B cell (primary cell): ENCODE measurements at regions of chr12 and their contacts with region 1.

Region 1: GRCh38 chr12:124992874-124993625 is 395 bp upstream of the BRI3BP start:
- DNase-seq: peak; percentile 92
- ATAC-seq: peak; percentile 34
- H3K4me3 ChIP-seq: peak overlapping the region; percentile 58 to 98 (median 76)
- H3K4me3 Mint-ChIP-seq: peak overlapping the region; percentile 90
- H3K27ac ChIP-seq: peak overlapping the region; percentile 35 to 62
- H3K27ac Mint-ChIP-seq: peak overlapping the region; percentile 86
- H3K4me1 ChIP-seq: peaks cover 34 to 54% of the 10 kb centered on the region in 2 donors
- H3K4me1 Mint-ChIP-seq: peaks cover 43% of the 10 kb centered on the region
- H3K27me3 ChIP-seq: no peaks in the 10 kb centered on the region
- H3K27me3 Mint-ChIP-seq: no peaks in the 10 kb centered on the region
- CTCF ChIP-seq: peak; percentile 80

Region 2: DNA sequence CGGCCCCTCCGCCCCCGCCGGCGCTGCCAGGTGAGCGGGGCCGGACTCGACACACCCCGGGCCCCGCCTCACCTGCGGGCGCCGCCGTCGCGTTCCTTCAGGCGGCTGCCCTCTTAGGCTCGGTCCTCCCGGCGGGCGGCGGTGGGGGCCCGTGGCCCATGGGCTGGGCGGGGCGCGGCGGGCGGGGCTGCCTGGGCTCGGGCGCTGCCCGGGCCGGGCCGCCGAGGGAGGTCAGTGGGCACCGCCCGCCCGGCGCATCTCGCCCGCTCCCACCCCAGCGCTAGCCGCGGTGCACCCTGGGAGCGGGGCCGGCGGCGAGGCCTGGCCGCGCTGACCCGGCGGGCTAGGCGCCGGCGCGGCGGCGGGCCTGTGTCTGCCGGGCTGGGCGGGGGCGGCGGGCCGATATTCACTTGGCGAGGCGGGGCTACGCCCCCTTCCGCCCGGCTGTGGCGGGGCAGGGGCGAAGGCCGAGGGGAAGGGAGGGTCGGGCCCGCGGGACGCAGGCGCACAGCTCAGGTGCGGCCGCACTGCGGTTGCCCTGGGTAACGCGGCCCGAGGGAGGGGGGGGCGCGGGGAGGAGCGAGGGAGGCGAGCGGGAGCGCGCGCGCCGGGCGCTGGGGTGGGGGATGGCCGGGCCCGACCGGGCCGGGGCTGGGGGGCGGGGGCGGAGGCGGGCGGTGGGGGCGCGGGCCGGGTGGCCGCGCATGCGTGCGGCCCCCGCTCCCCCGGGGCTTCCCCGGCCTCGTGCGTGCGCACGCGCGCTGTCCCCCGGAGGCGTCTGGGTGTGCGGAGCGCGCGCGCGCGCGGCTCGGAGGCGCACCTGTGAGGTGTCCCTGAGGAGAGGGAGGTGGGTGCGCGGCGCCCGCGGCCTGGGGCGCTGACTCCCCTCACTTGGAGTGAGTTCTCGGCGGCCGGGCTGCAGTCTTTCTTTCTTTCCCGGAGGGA is 1020.3 kb before region 1 on chr12 and contains the starts of genes CCDC92 and ZNF664:
- CTCF ChIA-PET with region 1: no interaction called
- POLR2A ChIA-PET with region 1: no interaction called
- intact Hi-C with region 1: loop called (anchors 10 kb)
- DNase-seq: peak; percentile 97
- ATAC-seq: peak; percentile 82
- H3K4me3 ChIP-seq: peak within 1 kb of the TSS; percentile 15 to 72 (median 62)
- H3K4me3 Mint-ChIP-seq: peak within 1 kb of the TSS; percentile 90
- H3K27ac ChIP-seq: peak within 1 kb of the TSS; percentile 16 to 71
- H3K27ac Mint-ChIP-seq: peak within 1 kb of the TSS; percentile 88
- H3K4me1 ChIP-seq: peaks cover 13 to 16% of the 10 kb centered on the region in 2 donors
- H3K4me1 Mint-ChIP-seq: peaks cover 16% of the 10 kb centered on the region
- H3K27me3 ChIP-seq: no peaks in the 10 kb centered on the region
- H3K27me3 Mint-ChIP-seq: no peaks in the 10 kb centered on the region
- CTCF ChIP-seq: no peak
- total RNA-seq, gene CCDC92: 33.6 and 36.2 TPM in 2 replicates
- total RNA-seq, gene ZNF664: 47.1 and 52.2 TPM in 2 replicates

Region 3: DNA sequence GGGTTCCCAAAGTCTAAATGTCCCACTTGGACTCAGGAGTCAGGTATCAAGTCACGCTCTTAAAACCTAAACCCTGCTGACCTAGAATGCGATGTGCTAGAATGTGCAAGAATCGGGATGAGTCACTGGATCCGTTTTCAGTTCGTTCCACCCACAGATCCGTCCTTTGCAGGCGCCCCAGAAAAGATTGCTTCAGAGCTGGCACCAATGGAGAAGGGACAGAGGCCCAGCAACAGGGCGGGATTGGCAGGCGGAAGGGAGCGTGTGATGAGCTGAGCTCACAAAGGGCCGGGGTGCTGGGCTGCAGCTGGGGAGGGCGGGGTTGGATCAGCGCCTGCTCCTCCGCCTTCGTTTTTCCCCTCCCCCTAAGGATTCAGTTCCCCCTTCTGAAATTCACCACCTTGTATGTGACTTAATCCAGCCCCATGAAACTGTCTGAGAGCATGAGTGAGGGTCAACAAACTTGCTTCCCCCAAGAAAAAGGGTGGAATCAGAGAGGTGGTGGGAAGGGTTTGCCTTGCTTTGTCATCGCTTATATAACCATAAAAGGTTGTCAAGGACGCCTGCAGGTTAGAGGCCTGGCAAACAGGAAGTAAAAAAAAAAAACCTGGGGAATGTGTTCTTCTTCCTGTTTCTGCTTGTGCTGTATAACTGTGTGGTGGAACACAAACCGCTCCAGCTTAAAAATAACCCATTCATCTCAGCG is 75.8 kb before region 1 on chr12:
- CTCF ChIA-PET with region 1: interaction called, 3 read pairs
- POLR2A ChIA-PET with region 1: interaction called, 11 read pairs
- intact Hi-C with region 1: loop called (anchors 1 kb)
- DNase-seq: peak; percentile 97
- ATAC-seq: peak; percentile 59
- H3K4me3 ChIP-seq: peak overlapping the region; percentile 36 to 73 (median 51)
- H3K4me3 Mint-ChIP-seq: peak overlapping the region; percentile 88
- H3K27ac ChIP-seq: peak overlapping the region; percentile 93 to 95
- H3K27ac Mint-ChIP-seq: peak overlapping the region; percentile 97
- H3K4me1 ChIP-seq: peaks cover 74 to 80% of the 10 kb centered on the region in 2 donors
- H3K4me1 Mint-ChIP-seq: peaks cover 88% of the 10 kb centered on the region
- H3K27me3 ChIP-seq: no peaks in the 10 kb centered on the region
- H3K27me3 Mint-ChIP-seq: no peaks in the 10 kb centered on the region
- CTCF ChIP-seq: no peak

Region 4: GRCh38 chr12:125021096-125021495 is 28.0 kb after region 1 on chr12:
- CTCF ChIA-PET with region 1: no interaction called
- POLR2A ChIA-PET with region 1: interaction called, 10 read pairs
- intact Hi-C with region 1: no loop called
- DNase-seq: no peak
- ATAC-seq: no peak
- H3K4me3 ChIP-seq: no peak overlapping the region
- H3K4me3 Mint-ChIP-seq: no peak overlapping the region
- H3K27ac ChIP-seq: no peak overlapping the region
- H3K27ac Mint-ChIP-seq: no peak overlapping the region
- H3K4me1 ChIP-seq: no peaks in the 10 kb centered on the region
- H3K4me1 Mint-ChIP-seq: peaks cover 1% of the 10 kb centered on the region
- H3K27me3 ChIP-seq: no peaks in the 10 kb centered on the region
- H3K27me3 Mint-ChIP-seq: no peaks in the 10 kb centered on the region
- CTCF ChIP-seq: no peak

Region 5: GRCh38 chr12:125065021-125065795 is 72.2 kb after region 1 on chr12 and contains the start of gene AACS:
- CTCF ChIA-PET with region 1: interaction called, 3 read pairs
- POLR2A ChIA-PET with region 1: no interaction called
- intact Hi-C with region 1: loop called (anchors 1 kb)
- DNase-seq: peak; percentile 85
- ATAC-seq: peak; percentile 99
- H3K4me3 ChIP-seq: peak within 1 kb of the TSS; percentile 40 to 79 (median 74)
- H3K4me3 Mint-ChIP-seq: peak within 1 kb of the TSS; percentile 85
- H3K27ac ChIP-seq: peak within 1 kb of the TSS in 1 of 2 donors; percentile 72
- H3K27ac Mint-ChIP-seq: peak within 1 kb of the TSS; percentile 26
- H3K4me1 ChIP-seq: peaks cover 10 to 12% of the 10 kb centered on the region in 2 donors
- H3K4me1 Mint-ChIP-seq: peaks cover 13% of the 10 kb centered on the region
- H3K27me3 ChIP-seq: peaks cover 0 to 6% (median 0%) of the 10 kb centered on the region in 4 experiments
- H3K27me3 Mint-ChIP-seq: peaks cover 6% of the 10 kb centered on the region
- CTCF ChIP-seq: no peak
- total RNA-seq, gene AACS: 20.8 and 27.5 TPM in 2 replicates

Region 6: GRCh38 chr12:125406131-125406530 is 413.1 kb after region 1 on chr12:
- CTCF ChIA-PET with region 1: no interaction called
- POLR2A ChIA-PET with region 1: no interaction called
- intact Hi-C with region 1: no loop called
- DNase-seq: peak; percentile 22
- ATAC-seq: no peak
- H3K4me3 ChIP-seq: no peak overlapping the region
- H3K4me3 Mint-ChIP-seq: no peak overlapping the region
- H3K27ac ChIP-seq: no peak overlapping the region
- H3K27ac Mint-ChIP-seq: no peak overlapping the region
- H3K4me1 ChIP-seq: peaks cover 10 to 14% of the 10 kb centered on the region in 2 donors
- H3K4me1 Mint-ChIP-seq: peaks cover 17% of the 10 kb centered on the region
- H3K27me3 ChIP-seq: peaks cover 0 to 8% (median 0%) of the 10 kb centered on the region in 4 experiments
- H3K27me3 Mint-ChIP-seq: peaks cover 31% of the 10 kb centered on the region
- CTCF ChIP-seq: no peak